PC-9 (cell line): ENCODE measurements at regions of chr1 and their contacts with region 1.

Region 1: DNA sequence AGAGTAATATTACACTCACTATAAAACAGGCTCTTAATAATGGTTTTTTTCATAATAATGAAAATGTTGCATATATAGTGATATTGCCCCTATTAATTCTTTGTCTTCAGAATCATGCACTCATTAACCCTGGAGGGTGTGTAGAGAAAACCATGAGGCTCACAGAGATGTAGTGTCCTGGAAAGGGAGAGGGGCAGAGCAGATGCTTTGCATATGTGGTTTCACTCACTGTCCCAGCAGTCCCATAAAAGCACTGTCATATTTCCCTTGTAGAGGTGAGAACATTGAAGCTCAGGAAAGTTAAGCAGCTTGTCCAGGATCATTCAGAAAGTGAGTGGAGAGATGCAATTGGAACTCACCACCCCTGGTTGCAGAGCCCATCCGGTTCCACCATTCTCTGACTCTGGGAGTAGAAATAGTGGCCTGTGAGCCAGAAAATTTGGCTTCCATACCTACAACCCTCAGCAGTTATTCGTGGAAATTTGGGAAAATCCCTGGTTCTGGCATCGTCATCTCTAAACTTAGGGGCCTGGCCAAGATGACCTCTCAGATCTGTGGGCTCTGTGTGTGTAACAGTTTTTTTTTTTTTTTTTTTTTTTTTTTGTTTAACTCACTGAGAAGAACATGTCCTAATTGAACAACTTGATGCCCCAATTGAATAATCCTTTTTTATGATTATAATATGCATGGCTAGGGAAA is 86.4 kb downstream of the RGL1 start:
- DNase-seq: no peak
- H3K4me3 ChIP-seq: no peak overlapping the region
- H3K27ac ChIP-seq: peak overlapping the region; percentile 67
- H3K4me1 ChIP-seq: peaks cover 45% of the 10 kb centered on the region
- H3K27me3 ChIP-seq: no peaks in the 10 kb centered on the region
- CTCF ChIP-seq: no peak

Region 2: GRCh38 chr1:183841550-183841949 is 49.8 kb before region 1 on chr1:
- CTCF ChIA-PET with region 1: no interaction called
- POLR2A ChIA-PET with region 1: no interaction called
- intact Hi-C with region 1: no loop called
- DNase-seq: no peak
- H3K4me3 ChIP-seq: no peak overlapping the region
- H3K27ac ChIP-seq: no peak overlapping the region
- H3K4me1 ChIP-seq: no peaks in the 10 kb centered on the region
- H3K27me3 ChIP-seq: no peaks in the 10 kb centered on the region
- CTCF ChIP-seq: no peak

Region 3: GRCh38 chr1:183901748-183902330 is 10.5 kb after region 1 on chr1:
- CTCF ChIA-PET with region 1: interaction called, 3 read pairs
- POLR2A ChIA-PET with region 1: interaction called, 10 read pairs
- intact Hi-C with region 1: no loop called
- DNase-seq: no peak
- H3K4me3 ChIP-seq: no peak overlapping the region
- H3K27ac ChIP-seq: no peak overlapping the region
- H3K4me1 ChIP-seq: no peaks in the 10 kb centered on the region
- H3K27me3 ChIP-seq: no peaks in the 10 kb centered on the region
- CTCF ChIP-seq: no peak

Region 4: GRCh38 chr1:185027252-185027882 is 1136.1 kb after region 1 on chr1:
- CTCF ChIA-PET with region 1: no interaction called
- POLR2A ChIA-PET with region 1: interaction called, 10 read pairs
- intact Hi-C with region 1: no loop called
- DNase-seq: no peak
- H3K4me3 ChIP-seq: no peak overlapping the region
- H3K27ac ChIP-seq: no peak overlapping the region
- H3K4me1 ChIP-seq: no peaks in the 10 kb centered on the region
- H3K27me3 ChIP-seq: no peaks in the 10 kb centered on the region
- CTCF ChIP-seq: no peak